Cardiac septum (tissue), 1 donor: ENCODE measurements at regions of chr17 and their contacts with region 1.

Region 1: DNA sequence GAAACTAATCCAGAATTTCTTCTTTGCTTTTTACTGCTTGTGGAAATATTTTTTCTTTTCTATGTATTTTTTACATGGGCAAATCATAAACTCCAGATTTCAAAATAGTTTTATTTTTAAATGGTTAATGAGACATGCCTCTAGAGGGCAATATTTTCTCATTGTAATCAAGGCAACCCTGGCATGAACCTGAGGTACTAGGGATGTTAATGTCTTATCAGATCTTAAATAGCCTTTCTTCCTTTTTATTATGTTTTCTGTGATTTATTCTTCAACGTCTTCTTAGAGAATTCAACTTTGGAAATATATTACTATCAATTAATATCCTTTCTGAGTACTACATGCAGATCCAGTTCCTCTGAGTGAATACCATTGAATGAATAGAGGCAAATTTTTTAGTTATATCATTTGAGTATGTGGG is 324.7 kb downstream of the BCAS3 start:
- DNase-seq: no peak

Region 2: DNA sequence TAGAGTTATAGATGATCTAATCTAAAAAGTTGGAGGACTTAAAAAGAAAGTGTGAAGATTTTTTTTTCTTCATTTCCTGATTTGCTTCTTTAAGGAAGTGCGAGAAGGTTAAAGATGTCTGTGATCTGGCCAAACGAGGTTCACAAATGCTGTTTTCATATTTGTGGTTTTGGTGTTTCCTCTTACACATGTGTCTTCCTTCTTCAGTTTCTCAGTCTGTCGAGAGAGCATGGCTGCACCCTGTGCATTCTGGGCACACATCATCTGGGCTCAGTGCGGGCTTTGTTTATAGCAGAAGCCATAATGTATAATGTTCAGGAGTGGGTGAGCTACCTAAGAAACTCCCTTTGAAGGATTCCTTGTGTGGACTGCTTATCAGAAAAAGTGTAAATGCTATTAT is 136.9 kb after region 1 on chr17:
- intact Hi-C with region 1: loop called (anchors 10 kb)
- DNase-seq: no peak

Region 3: DNA sequence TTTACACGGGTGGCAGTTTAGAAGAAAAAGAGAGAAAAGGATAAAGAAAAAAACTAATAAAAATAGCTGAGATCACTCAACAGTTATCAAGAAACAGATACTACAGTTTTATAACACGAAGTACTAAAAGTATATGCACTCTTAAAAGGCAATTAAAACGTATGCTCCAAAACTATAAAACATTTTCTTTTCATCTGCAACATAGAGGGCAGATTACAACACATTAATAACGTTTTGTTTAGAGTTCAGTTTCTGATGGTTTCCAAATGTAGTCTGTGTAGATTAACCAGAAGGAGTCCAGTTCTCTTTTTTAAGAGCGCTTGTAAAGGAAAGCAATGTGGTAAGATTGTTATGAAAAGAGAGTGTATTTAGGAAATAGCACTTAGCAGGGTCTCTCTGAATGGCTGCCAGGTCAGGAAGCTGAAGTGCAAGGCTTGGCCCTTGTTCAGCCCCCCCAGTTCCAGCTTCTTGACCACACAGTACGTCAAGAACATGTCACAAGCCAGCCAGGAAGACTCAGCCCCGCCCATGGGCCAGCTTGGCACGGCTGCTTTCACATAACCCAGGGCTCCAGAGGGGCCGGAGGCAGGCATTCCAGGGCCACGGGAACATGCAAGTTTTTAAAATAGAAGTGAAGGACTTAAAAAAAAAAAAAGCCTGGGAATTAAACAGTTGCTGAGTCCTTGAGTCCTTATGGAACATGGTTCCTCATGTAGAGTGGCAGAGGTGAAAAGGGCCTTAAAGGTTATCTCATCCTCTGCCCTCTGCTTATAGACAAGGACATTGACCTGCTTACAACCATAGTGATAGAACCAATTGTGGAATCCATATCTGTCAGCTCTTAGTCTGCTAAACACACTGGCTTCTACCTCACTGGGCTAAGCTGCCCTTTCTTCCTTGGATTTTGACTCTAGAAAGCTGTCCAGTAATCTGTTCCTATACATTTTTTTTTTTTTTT is 249.9 kb after region 1 on chr17:
- intact Hi-C with region 1: loop called (anchors 10 kb)
- DNase-seq: peak; percentile 92

Region 4: DNA sequence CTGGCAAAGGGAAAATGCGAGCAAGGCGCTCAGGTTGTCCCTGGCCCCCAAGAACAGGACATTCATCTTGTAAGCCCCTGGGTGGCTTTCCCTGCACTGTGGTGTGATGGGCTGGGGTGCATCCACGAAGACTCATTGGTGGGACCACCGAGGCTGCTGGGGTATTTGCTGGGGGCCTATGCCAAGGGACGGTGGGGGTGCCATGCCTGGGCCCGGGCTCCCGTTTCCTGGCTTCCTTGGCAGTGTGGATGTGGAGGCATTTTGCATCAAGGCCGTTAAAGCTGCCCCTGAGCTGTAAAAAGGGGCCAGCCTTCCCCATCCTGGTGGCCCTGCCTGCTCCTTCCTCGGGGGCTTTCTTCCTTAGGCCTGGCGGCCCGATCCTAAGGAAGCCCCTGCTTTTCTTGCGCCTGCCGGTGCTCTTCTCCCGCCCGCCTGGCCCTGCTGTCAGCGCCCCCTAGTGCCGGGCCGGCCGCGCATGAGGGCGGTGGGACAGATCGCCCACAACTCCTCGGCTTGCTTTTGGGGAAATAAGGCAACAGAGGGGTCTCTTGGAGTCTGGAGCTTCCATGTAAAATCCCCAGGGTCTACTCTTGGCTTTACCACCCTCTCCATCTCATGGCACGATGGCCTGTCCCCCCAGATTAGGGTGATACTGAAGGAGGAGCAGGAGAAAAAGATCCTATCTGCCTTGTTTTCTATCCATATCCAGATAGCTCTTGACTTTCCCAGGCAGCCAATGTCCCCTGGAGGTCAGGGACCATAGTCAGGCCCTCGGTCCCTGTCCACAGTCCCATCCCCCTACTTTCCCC is 387.5 kb after region 1 on chr17:
- intact Hi-C with region 1: loop called (anchors 2 kb)
- DNase-seq: no peak